ENCODE measurements at regions of chr14 and their contacts with region 1.

Region 1: DNA sequence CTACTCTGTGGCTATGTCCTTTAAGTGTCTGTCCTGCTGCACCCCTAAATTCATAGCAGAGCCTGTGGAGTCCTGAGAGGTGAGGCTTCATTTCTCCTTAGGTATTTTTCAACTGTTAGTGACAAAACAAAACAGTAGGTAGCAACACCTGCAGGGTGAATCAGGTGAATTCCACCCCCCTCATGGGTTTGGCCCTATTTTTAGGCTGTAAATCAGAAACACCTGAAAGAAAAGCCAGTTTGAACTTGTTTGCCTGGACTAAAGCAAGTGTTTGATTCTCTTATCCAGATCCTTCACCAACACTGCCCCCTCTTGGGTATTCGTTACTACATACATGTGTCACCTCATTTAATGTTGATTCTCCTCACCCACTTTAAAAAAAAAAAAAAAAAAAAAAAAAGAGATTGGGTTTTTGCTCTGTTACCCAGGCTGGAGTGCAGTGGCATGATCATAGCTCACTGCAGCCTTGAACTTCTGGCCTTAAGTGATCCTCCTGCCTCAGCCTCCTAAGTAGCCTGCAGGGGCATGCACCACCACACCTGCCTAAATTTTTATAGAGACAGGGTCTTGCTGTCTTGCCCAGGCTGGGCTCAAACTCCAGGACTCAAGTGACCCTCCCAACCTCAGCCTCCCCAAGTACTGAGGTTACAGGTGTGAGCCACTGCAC is 10.3 kb downstream of the TBPL2 start:
- DNase-seq: peak; percentile 76
- H3K4me3 ChIP-seq: no peak overlapping the region
- H3K27ac ChIP-seq: no peak overlapping the region
- H3K4me1 ChIP-seq: no peaks in the 10 kb centered on the region
- H3K27me3 ChIP-seq: peaks cover 0 to under 1% of the 10 kb centered on the region in 2 experiments
- CTCF ChIP-seq: peak; percentile 30 to 44
- POLR2A ChIP-seq: no peak

Region 2: DNA sequence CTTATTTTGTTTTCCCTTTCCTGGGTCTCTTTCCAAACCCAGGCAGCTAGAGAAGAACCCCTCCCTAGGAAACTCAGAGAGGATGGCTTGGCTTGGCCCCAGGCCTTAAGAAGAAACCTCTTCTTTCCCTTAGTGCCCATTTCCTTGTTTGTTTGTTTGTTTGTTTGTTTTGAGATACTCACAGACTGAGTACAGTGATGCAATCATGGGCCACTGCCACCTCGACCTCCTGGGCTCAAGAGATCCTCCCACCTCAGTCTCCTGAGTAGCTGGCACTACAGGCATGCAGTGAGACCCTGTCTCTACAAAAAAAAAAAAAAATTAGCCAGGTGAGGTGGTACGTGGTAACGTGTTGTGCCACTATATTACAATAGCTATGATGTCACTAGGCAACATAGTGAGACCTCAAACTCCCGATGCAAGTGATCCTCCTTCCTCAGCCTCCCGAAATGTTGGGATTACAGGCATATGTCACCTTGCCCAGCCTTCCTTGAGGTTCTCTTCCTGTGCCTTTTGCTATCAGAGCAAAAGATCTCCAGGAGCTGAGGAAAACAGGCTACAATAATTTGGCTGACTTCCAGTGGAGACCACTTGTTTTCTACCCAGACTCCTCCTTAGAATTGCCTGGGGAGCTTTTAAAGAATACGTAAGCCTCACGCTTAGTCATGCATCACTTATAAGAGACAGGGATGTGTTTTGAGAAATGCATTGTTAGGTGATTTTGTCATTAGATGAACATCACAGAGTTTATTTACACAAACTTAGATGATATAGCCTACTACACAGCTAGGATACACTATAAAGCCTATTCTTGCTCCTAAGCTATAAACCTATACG is 335.6 kb before region 1 on chr14:
- CTCF ChIA-PET with region 1: no interaction called
- POLR2A ChIA-PET with region 1: no interaction called
- dilution Hi-C with region 1: no loop called
- intact Hi-C with region 1: loop called (anchors 1 kb)
- DNase-seq: no peak
- H3K4me3 ChIP-seq: no peak overlapping the region
- H3K27ac ChIP-seq: no peak overlapping the region
- H3K4me1 ChIP-seq: no peaks in the 10 kb centered on the region
- H3K27me3 ChIP-seq: no peaks in the 10 kb centered on the region
- CTCF ChIP-seq: no peak
- POLR2A ChIP-seq: no peak

Region 3: DNA sequence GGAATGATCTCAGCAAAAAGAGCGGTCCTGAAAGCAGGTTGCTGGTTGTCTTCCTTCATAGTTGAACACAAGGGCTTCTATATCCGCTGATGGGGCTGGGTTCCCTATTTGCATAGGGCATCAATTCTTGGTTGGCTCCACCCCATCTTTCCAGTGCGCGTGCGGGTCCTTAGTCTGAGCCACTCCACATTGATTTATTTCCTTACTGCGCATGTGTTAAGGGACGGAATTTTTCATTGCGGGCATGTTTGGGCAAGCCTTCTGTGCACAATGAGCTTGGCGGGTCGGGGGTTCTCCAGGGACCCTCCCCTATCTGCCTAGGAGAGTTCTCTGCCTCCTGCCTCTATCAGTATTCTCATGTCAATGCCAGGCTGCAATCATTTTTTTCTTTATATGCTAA is 217.5 kb before region 1 on chr14:
- CTCF ChIA-PET with region 1: interaction called, 22 read pairs
- POLR2A ChIA-PET with region 1: no interaction called
- dilution Hi-C with region 1: no loop called
- intact Hi-C with region 1: loop called (anchors 1 kb)
- DNase-seq: no peak
- H3K4me3 ChIP-seq: no peak overlapping the region
- H3K27ac ChIP-seq: no peak overlapping the region
- H3K4me1 ChIP-seq: no peaks in the 10 kb centered on the region
- H3K27me3 ChIP-seq: no peaks in the 10 kb centered on the region
- CTCF ChIP-seq: no peak
- POLR2A ChIP-seq: no peak

Region 4: GRCh38 chr14:55245657-55246268 is 184.4 kb before region 1 on chr14:
- CTCF ChIA-PET with region 1: interaction called, 38 read pairs
- POLR2A ChIA-PET with region 1: no interaction called
- dilution Hi-C with region 1: no loop called
- intact Hi-C with region 1: loop called (anchors 1 kb)
- DNase-seq: peak; percentile 49
- H3K4me3 ChIP-seq: no peak overlapping the region
- H3K27ac ChIP-seq: no peak overlapping the region
- H3K4me1 ChIP-seq: no peaks in the 10 kb centered on the region
- H3K27me3 ChIP-seq: peaks cover 23 to 33% of the 10 kb centered on the region in 2 experiments
- CTCF ChIP-seq: peak; percentile 52 to 64
- POLR2A ChIP-seq: no peak

Region 5: GRCh38 chr14:55354500-55354899 is 75.7 kb before region 1 on chr14:
- CTCF ChIA-PET with region 1: interaction called, 11 read pairs
- POLR2A ChIA-PET with region 1: no interaction called
- dilution Hi-C with region 1: no loop called
- intact Hi-C with region 1: loop called (anchors 2 kb)
- DNase-seq: peak; percentile 43
- H3K4me3 ChIP-seq: no peak overlapping the region
- H3K27ac ChIP-seq: no peak overlapping the region
- H3K4me1 ChIP-seq: no peaks in the 10 kb centered on the region
- H3K27me3 ChIP-seq: no peaks in the 10 kb centered on the region
- CTCF ChIP-seq: peak; percentile 54 to 72
- POLR2A ChIP-seq: no peak

Region 6: GRCh38 chr14:55416866-55417265 is 13.3 kb before region 1 on chr14:
- CTCF ChIA-PET with region 1: interaction called, 31 read pairs
- POLR2A ChIA-PET with region 1: no interaction called
- dilution Hi-C with region 1: no loop called
- intact Hi-C with region 1: no loop called
- DNase-seq: no peak
- H3K4me3 ChIP-seq: no peak overlapping the region
- H3K27ac ChIP-seq: no peak overlapping the region
- H3K4me1 ChIP-seq: peaks cover 24% of the 10 kb centered on the region
- H3K27me3 ChIP-seq: peaks cover 0 to 3% of the 10 kb centered on the region in 2 experiments
- CTCF ChIP-seq: peak in 1 of 2 donors; percentile 40
- POLR2A ChIP-seq: no peak